Activated CD4-positive, alpha-beta memory T cell treated with anti-CD3 and anti-CD28 coated beads, Interleukin-2, amount 10 ng/mL, durations not matched to agents 7 days and 5 days (primary cell): ENCODE measurements at regions of chr17 and their contacts with region 1.

Region 1: DNA sequence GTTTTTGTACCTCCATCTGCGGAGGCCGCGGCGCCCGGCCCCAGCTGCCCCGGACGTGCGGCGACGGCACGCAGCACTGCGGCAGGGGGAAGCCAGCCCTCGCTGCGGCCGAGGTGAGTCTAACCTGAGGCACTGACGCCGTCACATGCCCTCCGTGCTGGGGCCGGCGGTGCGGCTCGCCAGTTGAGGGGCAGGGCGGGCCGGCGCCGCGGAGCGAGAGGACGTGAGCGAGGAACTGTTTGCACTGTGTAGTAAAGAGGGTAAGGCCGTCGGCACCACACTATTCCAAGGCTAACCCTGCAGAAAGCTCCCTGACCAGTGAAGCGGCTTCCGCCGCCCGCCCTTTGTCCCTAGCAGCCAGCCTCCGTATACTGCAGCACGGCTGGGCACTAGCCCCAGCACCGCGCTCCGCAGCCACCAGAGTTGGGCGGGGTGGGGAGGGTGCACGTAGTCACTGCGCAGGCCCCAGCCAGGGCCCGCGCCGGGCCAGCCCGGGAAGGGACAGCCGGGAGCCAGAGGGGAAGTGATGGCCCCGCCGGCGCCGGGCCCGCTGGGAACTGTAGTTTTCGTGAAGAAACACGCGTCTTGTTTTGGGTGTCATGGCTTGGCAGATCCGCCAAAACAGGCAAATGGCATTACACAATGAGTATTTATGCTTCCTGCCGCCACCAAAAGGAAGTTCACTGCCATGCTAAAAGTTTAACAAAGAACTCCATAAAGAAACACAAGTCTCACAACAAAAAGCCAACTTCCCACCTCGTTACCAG is 580 bp upstream of the KANSL1 start:
- DNase-seq: peak; percentile 96
- H3K4me3 Mint-ChIP-seq: peak overlapping the region; percentile 91
- H3K27ac Mint-ChIP-seq: peak overlapping the region; percentile 99
- H3K4me1 Mint-ChIP-seq: peaks cover 61% of the 10 kb centered on the region
- H3K27me3 Mint-ChIP-seq: no peaks in the 10 kb centered on the region

Region 2: GRCh38 chr17:45759761-45760160 is 434.0 kb before region 1 on chr17:
- CTCF ChIA-PET with region 1: no interaction called
- POLR2A ChIA-PET with region 1: no interaction called
- DNase-seq: no peak
- H3K4me3 Mint-ChIP-seq: no peak overlapping the region
- H3K27ac Mint-ChIP-seq: no peak overlapping the region
- H3K4me1 Mint-ChIP-seq: no peaks in the 10 kb centered on the region
- H3K27me3 Mint-ChIP-seq: peaks cover 18% of the 10 kb centered on the region

Region 3: GRCh38 chr17:45923511-45924268 is 270.1 kb before region 1 on chr17:
- CTCF ChIA-PET with region 1: no interaction called
- POLR2A ChIA-PET with region 1: no interaction called
- DNase-seq: no peak
- H3K4me3 Mint-ChIP-seq: no peak overlapping the region
- H3K27ac Mint-ChIP-seq: no peak overlapping the region
- H3K4me1 Mint-ChIP-seq: no peaks in the 10 kb centered on the region
- H3K27me3 Mint-ChIP-seq: peaks cover 4% of the 10 kb centered on the region

Region 4: GRCh38 chr17:46056800-46057304 is 137.0 kb before region 1 on chr17:
- CTCF ChIA-PET with region 1: no interaction called
- POLR2A ChIA-PET with region 1: no interaction called
- DNase-seq: no peak
- H3K4me3 Mint-ChIP-seq: no peak overlapping the region
- H3K27ac Mint-ChIP-seq: no peak overlapping the region
- H3K4me1 Mint-ChIP-seq: peaks cover 22% of the 10 kb centered on the region
- H3K27me3 Mint-ChIP-seq: no peaks in the 10 kb centered on the region

Region 5: DNA sequence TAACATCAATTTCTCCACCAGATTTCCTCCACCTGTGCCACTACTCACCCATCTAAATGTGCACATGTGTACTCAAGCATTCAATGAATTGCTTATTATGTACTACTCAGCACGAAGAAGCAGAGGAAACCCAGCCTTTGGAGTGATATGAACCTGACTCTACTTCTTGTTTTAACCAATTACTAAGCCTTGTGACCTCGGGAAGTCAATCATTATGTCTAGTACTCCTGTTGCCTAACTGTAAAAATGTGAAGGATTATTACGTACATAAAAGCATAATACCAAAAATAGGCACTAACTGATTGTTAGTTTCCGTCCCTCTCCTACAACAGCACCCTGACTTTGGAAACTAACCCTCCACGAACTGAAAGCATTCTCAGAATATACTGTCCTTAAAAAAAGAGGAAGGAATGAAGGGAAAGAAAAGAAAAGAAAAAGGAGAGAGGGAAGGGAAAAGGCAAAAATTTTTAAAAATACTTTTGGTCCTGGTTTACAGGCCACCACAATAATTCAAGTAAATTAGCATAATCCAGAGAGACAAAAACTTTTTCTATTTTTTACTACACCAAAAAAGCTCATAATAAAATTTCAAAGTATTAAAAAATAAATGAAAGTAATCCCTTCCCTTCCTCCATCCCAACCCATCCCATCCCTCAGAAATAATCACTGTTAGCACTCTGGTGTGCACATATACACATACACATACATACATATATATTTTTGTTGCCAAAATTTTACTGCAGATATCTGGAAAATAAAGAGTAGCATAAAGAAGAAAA is 54.2 kb before region 1 on chr17:
- CTCF ChIA-PET with region 1: interaction called, 16 read pairs
- POLR2A ChIA-PET with region 1: interaction called, 17 read pairs
- DNase-seq: no peak
- H3K4me3 Mint-ChIP-seq: no peak overlapping the region
- H3K27ac Mint-ChIP-seq: no peak overlapping the region
- H3K4me1 Mint-ChIP-seq: peaks cover 76% of the 10 kb centered on the region
- H3K27me3 Mint-ChIP-seq: no peaks in the 10 kb centered on the region

Region 6: GRCh38 chr17:46154151-46154816 is 39.5 kb before region 1 on chr17:
- CTCF ChIA-PET with region 1: interaction called, 11 read pairs
- POLR2A ChIA-PET with region 1: interaction called, 9 read pairs
- DNase-seq: peak; percentile 51
- H3K4me3 Mint-ChIP-seq: peak overlapping the region; percentile 55
- H3K27ac Mint-ChIP-seq: peak overlapping the region; percentile 87
- H3K4me1 Mint-ChIP-seq: peaks cover 76% of the 10 kb centered on the region
- H3K27me3 Mint-ChIP-seq: no peaks in the 10 kb centered on the region

Region 7: GRCh38 chr17:46179375-46179999 is 14.3 kb before region 1 on chr17:
- CTCF ChIA-PET with region 1: interaction called, 41 read pairs
- POLR2A ChIA-PET with region 1: interaction called, 31 read pairs
- DNase-seq: no peak
- H3K4me3 Mint-ChIP-seq: peak overlapping the region; percentile 4
- H3K27ac Mint-ChIP-seq: peak overlapping the region; percentile 50
- H3K4me1 Mint-ChIP-seq: peaks cover 65% of the 10 kb centered on the region
- H3K27me3 Mint-ChIP-seq: no peaks in the 10 kb centered on the region